H1 (cell line): ENCODE measurements at regions of chr12 and their contacts with region 1.

Region 1: DNA sequence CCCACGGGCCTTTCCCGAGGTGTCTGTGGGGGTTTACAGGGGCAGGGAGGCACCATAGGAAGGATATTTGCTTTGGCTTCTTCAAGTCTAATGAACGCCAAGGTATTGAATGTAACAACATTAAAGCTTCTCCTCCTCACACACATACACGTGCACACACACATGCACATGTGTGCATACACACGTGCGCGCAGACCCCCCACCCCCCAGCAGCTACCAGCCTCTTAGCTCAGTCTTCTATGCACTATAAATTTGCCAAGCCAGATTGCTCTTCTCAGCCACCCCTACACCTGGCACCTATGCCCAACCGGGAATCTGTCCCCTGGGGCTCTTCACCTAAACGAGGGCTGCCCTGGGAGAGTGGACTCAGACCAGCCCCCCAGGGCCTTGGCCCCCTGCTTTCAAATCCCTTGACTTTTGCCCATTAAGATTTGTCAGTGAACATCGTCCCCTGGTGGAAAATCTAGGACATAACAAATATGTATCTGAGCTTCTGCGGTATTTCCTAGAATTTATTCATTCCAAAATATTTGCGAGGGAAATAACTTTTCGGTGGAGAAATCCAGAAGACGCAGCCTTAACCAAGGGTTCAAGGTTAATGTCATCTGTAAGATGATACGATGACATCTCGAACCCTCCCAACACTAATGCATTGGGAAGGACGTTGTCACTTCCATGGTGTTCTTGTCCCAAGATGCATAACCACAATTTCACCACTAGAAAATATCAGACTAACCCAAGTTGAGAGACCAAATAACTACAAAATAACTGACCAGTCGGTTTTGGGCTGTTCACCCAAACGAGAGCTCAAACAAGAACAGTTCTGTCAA is 330.4 kb downstream of the MED13L start:
- DNase-seq: no peak
- H3K4me3 ChIP-seq: no peak overlapping the region
- H3K27ac ChIP-seq: no peak overlapping the region
- H3K4me1 ChIP-seq: peaks cover 0 to 6% (median 2%) of the 10 kb centered on the region in 4 experiments; a peak in 4 of 7 replicates
- H3K27me3 ChIP-seq: no peaks in the 10 kb centered on the region
- CTCF ChIP-seq: peak in 2 of 3 experiments; percentile 53 to 57; a peak in 2 of 4 replicates
- EP300 ChIP-seq: no peak
- POLR2A ChIP-seq: no peak
- RAD21 ChIP-seq: peak; percentile 69 to 76

Region 2: GRCh38 chr12:115957686-115958290 is 10.7 kb after region 1 on chr12:
- CTCF ChIA-PET with region 1: interaction called, 11 read pairs
- POLR2A ChIA-PET with region 1: no interaction called
- DNase-seq: no peak
- H3K4me3 ChIP-seq: no peak overlapping the region
- H3K27ac ChIP-seq: no peak overlapping the region
- H3K4me1 ChIP-seq: peaks cover 0 to 3% (median 1%) of the 10 kb centered on the region in 4 experiments; a peak in 2 of 7 replicates
- H3K27me3 ChIP-seq: no peaks in the 10 kb centered on the region
- CTCF ChIP-seq: no peak
- EP300 ChIP-seq: no peak
- POLR2A ChIP-seq: no peak
- RAD21 ChIP-seq: no peak